ENCODE measurements at regions of chr18 and their contacts with region 1.

Region 1: DNA sequence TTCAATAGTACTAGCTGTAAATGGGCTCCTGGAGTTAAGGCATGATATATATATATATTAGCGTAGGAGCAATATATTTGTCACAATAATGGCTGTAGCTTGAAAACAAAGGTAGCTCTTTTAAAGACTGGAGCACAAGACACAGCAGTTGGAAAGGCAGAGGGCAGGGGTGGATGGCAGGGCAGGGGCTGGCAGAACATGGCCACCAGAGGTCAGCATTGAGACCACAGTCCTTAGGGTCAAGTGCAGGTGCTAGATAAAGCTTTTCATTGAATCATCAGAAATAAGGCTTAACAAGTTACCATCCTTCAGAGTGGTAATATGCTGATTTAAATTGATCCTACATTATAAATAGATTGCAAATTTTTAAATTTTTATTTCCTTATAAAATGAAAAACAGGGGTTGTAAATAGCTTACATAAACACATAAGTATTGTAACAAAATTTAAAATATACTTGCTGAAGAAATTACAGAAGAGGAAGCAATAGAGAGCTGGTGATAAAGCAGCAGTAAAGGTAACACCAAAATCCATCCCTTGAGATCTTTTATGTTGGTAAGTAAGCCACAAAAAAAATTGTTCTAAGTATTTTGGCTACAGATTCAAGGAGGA is 161.2 kb upstream of the PIEZO2 start:
- DNase-seq: peak; percentile 66
- ATAC-seq: no peak
- H3K4me3 Mint-ChIP-seq: no peak overlapping the region
- H3K27ac Mint-ChIP-seq: no peak overlapping the region
- H3K4me1 Mint-ChIP-seq: peaks cover 4% of the 10 kb centered on the region
- H3K27me3 Mint-ChIP-seq: peaks cover 5% of the 10 kb centered on the region

Region 2: GRCh38 chr18:11518788-11519685 is 208.5 kb after region 1 on chr18:
- CTCF ChIA-PET with region 1: interaction called, 7 read pairs
- POLR2A ChIA-PET with region 1: no interaction called
- intact Hi-C with region 1: loop called (anchors 2 to 10 kb)
- DNase-seq: peak; percentile 74
- ATAC-seq: peak; percentile 57
- H3K4me3 Mint-ChIP-seq: no peak overlapping the region
- H3K27ac Mint-ChIP-seq: no peak overlapping the region
- H3K4me1 Mint-ChIP-seq: no peaks in the 10 kb centered on the region
- H3K27me3 Mint-ChIP-seq: no peaks in the 10 kb centered on the region

Region 3: GRCh38 chr18:11529081-11529480 is 218.5 kb after region 1 on chr18:
- CTCF ChIA-PET with region 1: no interaction called
- POLR2A ChIA-PET with region 1: no interaction called
- intact Hi-C with region 1: loop called in 1 of 2 experiments (anchors 10 kb)
- DNase-seq: no peak
- ATAC-seq: no peak
- H3K4me3 Mint-ChIP-seq: no peak overlapping the region
- H3K27ac Mint-ChIP-seq: no peak overlapping the region
- H3K4me1 Mint-ChIP-seq: no peaks in the 10 kb centered on the region
- H3K27me3 Mint-ChIP-seq: no peaks in the 10 kb centered on the region

Region 4: GRCh38 chr18:11553098-11553940 is 242.7 kb after region 1 on chr18:
- CTCF ChIA-PET with region 1: interaction called, 14 read pairs
- POLR2A ChIA-PET with region 1: no interaction called
- intact Hi-C with region 1: loop called in 1 of 2 experiments (anchors 1 kb)
- DNase-seq: peak; percentile 51
- ATAC-seq: peak; percentile 61
- H3K4me3 Mint-ChIP-seq: no peak overlapping the region
- H3K27ac Mint-ChIP-seq: no peak overlapping the region
- H3K4me1 Mint-ChIP-seq: no peaks in the 10 kb centered on the region
- H3K27me3 Mint-ChIP-seq: peaks cover 2% of the 10 kb centered on the region

Measured in activated CD4-positive, alpha-beta T cell treated with anti-CD3 and anti-CD28 coated beads for 36 hours (primary cell).